ENCODE measurements at regions of chrX and their contacts with region 1.

Region 1: DNA sequence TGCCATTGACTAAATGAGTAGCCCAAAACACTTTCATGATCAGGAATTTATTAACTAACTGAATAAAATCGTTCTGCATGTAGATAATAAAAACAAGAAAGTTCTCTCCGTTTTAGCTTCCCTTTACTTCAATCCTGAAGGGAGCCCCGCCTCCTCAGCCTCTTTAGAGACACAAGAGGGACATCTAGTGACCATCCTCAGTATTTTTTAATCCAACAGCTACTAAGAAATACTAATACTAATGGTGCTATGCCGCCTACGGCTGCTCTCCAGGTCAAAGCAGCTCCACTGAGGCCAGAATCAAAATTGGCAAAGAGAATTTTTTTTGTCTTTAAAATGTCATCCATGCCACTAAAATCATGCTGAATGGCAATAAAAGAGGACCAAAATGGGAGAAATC is 3.2 kb upstream of the PCDH19 start:
- DNase-seq: peak; percentile 33 to 59
- ATAC-seq: peak; percentile 79 to 81
- H3K4me3 ChIP-seq: no peak overlapping the region
- H3K27ac ChIP-seq: no peak overlapping the region
- H3K4me1 ChIP-seq: peaks cover 4% of the 10 kb centered on the region; the same call in 1 of the 3 replicates
- CTCF ChIP-seq: peak; percentile 55
- EP300 ChIP-seq: no peak
- POLR2A ChIP-seq: no peak
- RAD21 ChIP-seq: peak; percentile 70 to 71

Region 2: GRCh38 chrX:100207331-100208024 is 205.8 kb before region 1 on chrX:
- CTCF ChIA-PET with region 1: no interaction called
- POLR2A ChIA-PET with region 1: no interaction called
- DNase-seq: no peak
- ATAC-seq: no peak
- H3K4me3 ChIP-seq: no peak overlapping the region
- H3K27ac ChIP-seq: no peak overlapping the region
- H3K4me1 ChIP-seq: no peaks in the 10 kb centered on the region
- CTCF ChIP-seq: no peak
- EP300 ChIP-seq: no peak
- POLR2A ChIP-seq: no peak
- RAD21 ChIP-seq: no peak

Region 3: GRCh38 chrX:100368167-100368566 is 45.1 kb before region 1 on chrX:
- CTCF ChIA-PET with region 1: interaction called, 22 read pairs
- POLR2A ChIA-PET with region 1: no interaction called
- DNase-seq: peak; percentile 5 to 22
- ATAC-seq: peak; percentile 81 to 87; a peak in 5 of 6 replicates
- H3K4me3 ChIP-seq: no peak overlapping the region
- H3K27ac ChIP-seq: no peak overlapping the region
- H3K4me1 ChIP-seq: no peaks in the 10 kb centered on the region
- CTCF ChIP-seq: peak; percentile 22; the same call in 2 of the 3 replicates
- EP300 ChIP-seq: no peak
- POLR2A ChIP-seq: no peak
- RAD21 ChIP-seq: peak in 1 of 2 experiments; percentile 35; a peak in 2 of 5 replicates

Region 4: DNA sequence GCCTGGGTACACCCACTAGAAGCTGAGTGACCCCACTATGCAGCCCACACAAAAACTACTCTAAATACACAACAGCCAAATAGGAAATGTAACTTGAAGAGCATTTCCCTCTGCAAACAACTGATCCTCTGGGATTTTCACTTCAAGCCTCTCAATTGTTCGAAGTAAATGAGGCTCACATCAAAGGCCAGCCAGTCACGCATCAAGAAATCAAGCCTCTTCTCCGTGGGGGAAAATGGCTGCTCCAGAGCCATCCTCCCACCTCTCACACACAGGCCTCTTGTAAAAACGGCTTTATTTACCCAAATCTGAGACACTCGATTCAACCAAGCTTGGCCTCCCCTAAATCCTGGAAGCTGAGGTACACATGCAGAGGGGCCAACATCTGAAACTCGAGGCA is 17.4 kb before region 1 on chrX:
- CTCF ChIA-PET with region 1: interaction called, 10 read pairs
- POLR2A ChIA-PET with region 1: no interaction called
- DNase-seq: no peak
- ATAC-seq: no peak
- H3K4me3 ChIP-seq: no peak overlapping the region
- H3K27ac ChIP-seq: no peak overlapping the region
- H3K4me1 ChIP-seq: no peaks in the 10 kb centered on the region
- CTCF ChIP-seq: no peak
- EP300 ChIP-seq: no peak
- POLR2A ChIP-seq: no peak
- RAD21 ChIP-seq: no peak

Region 5: DNA sequence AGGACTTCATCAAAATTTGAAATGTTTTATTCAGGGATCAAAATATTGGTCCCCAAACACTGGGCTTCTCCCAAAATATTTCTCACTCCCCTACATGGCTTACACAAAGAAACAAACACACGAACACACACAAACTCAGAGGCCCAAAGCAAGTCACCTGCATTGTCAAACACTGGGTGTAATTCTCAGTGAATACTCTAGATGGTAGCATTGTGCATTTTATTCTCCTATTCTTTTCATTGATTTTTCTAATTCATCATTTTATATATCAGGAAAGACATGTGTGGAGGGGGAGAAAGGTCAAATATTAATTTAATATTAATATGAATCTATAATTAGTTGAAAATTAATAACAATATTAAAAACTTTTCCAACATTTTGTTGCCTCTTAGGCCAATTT is 99.2 kb after region 1 on chrX:
- CTCF ChIA-PET with region 1: no interaction called
- POLR2A ChIA-PET with region 1: no interaction called
- DNase-seq: peak; percentile 1 to 25
- ATAC-seq: no peak
- H3K4me3 ChIP-seq: no peak overlapping the region
- H3K27ac ChIP-seq: no peak overlapping the region
- H3K4me1 ChIP-seq: no peaks in the 10 kb centered on the region
- CTCF ChIP-seq: peak; percentile 50
- EP300 ChIP-seq: no peak
- POLR2A ChIP-seq: no peak
- RAD21 ChIP-seq: peak; percentile 43 to 57; a peak in 2 of 5 replicates

Measured in A549 (cell line).